Endothelial cell of umbilical vein (primary cell): ENCODE measurements at regions of chr3 and their contacts with region 1.

Region 1: GRCh38 chr3:169497567-169498257 is 165.8 kb downstream of the MECOM start:
- DNase-seq: peak; percentile 94
- H3K4me3 ChIP-seq: no peak overlapping the region
- H3K27ac ChIP-seq: peak overlapping the region; percentile 100
- H3K4me1 ChIP-seq: peaks cover 73% of the 10 kb centered on the region
- H3K27me3 ChIP-seq: no peaks in the 10 kb centered on the region
- CTCF ChIP-seq: no peak
- POLR2A ChIP-seq: no peak

Region 2: DNA sequence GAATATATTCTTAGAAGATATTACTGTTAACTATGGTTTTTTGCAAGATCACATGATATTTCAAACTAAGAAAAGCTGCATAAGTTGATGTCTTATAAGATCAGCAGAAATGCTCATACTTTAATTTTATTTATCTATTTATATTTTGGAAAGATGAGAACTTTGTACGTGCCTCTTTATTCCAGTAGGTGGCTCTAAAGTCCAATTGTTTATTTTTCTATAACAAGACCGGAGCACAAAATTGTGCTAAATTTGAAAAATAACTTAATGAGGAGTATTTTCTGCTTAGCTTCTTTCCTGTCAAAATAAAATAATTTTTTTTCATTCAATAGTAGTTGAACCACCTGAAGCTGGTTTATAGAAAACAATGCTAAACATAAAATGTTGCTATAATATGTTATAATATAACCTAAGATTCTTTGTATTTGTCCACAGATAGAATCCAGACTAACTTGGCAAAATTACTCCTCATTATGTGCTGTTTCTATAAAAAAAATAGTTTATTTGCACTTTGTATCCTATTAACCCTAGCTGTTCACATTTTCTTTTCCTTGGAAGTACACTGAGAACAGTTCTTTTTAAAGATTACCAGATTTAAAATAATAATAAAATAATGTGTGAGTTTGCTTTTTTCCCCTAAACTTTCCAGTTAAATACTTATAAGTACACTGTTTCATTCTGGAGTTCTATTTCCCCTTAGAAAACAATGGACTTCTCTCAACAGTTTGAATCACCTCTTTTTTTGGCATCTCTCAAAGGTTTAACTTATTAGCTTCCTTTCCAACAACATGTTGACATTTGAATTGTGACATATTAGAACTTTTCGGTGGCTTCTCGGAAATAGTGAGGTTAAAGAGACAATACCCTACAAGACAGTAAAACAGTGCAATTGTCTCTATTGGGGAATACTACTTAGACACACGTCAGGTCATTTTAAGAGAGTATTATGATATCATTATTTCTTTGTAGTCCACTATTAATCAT is 364.2 kb before region 1 on chr3:
- CTCF ChIA-PET with region 1: no interaction called
- POLR2A ChIA-PET with region 1: no interaction called
- dilution Hi-C with region 1: no loop called
- intact Hi-C with region 1: loop called (anchors 1 kb)
- DNase-seq: peak; percentile 83
- H3K4me3 ChIP-seq: no peak overlapping the region
- H3K27ac ChIP-seq: peak overlapping the region; percentile 52
- H3K4me1 ChIP-seq: peaks cover 44% of the 10 kb centered on the region
- H3K27me3 ChIP-seq: no peaks in the 10 kb centered on the region
- CTCF ChIP-seq: peak in 1 of 2 donors; percentile 16
- POLR2A ChIP-seq: peak; percentile 17

Region 3: GRCh38 chr3:169295126-169295525 is 202.6 kb before region 1 on chr3:
- CTCF ChIA-PET with region 1: no interaction called
- POLR2A ChIA-PET with region 1: no interaction called
- dilution Hi-C with region 1: no loop called
- intact Hi-C with region 1: loop called (anchors 5 kb)
- DNase-seq: peak; percentile 71
- H3K4me3 ChIP-seq: no peak overlapping the region
- H3K27ac ChIP-seq: no peak overlapping the region
- H3K4me1 ChIP-seq: peaks cover 7% of the 10 kb centered on the region
- H3K27me3 ChIP-seq: no peaks in the 10 kb centered on the region
- CTCF ChIP-seq: peak; percentile 29 to 32
- POLR2A ChIP-seq: no peak

Region 4: DNA sequence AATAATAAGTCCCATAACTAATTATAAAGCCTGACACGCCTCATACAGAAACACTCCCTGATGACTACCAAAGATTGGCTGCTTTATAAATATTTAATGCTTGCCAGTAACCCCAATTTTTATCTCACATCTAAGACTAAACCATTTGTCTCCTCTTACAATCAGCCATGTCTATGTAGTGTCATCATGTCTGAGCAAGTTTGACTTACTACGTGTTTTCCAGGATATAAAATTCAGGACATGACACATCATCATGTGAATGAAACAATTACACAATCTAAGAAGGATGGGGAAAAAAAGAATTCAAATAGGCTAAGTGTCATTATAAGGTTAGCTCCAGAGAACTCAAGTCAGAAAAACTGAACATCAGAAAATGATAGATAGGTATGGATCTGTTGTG is 42.9 kb before region 1 on chr3:
- CTCF ChIA-PET with region 1: interaction called, 3 read pairs
- POLR2A ChIA-PET with region 1: no interaction called
- dilution Hi-C with region 1: no loop called
- intact Hi-C with region 1: loop called (anchors 1 kb)
- DNase-seq: peak; percentile 93
- H3K4me3 ChIP-seq: no peak overlapping the region
- H3K27ac ChIP-seq: peak overlapping the region; percentile 69
- H3K4me1 ChIP-seq: peaks cover 28% of the 10 kb centered on the region
- H3K27me3 ChIP-seq: no peaks in the 10 kb centered on the region
- CTCF ChIP-seq: no peak
- POLR2A ChIP-seq: no peak

Region 5: DNA sequence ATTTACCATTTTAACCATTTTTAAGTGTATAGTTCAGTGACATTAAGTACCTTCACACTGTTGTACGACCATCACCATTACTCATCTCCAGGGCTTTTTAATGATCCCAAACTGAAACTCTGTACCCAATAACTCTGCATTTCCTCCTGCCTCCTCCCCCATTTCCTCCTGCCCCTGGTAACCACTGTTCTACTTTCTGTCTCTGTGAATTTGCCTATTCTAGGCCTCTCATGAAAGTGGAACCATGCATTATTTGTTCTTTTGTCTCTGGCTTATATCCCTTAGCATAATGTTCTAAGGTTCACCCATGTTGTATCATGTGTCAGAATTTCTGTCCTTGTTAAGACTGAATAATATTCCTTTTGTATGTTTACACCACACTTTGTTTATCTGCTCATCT is 11.6 kb after region 1 on chr3:
- CTCF ChIA-PET with region 1: interaction called, 3 read pairs
- POLR2A ChIA-PET with region 1: no interaction called
- dilution Hi-C with region 1: no loop called
- intact Hi-C with region 1: loop called (anchors 1 kb)
- DNase-seq: peak; percentile 38
- H3K4me3 ChIP-seq: no peak overlapping the region
- H3K27ac ChIP-seq: peak overlapping the region; percentile 27
- H3K4me1 ChIP-seq: peaks cover 25% of the 10 kb centered on the region
- H3K27me3 ChIP-seq: no peaks in the 10 kb centered on the region
- CTCF ChIP-seq: no peak
- POLR2A ChIP-seq: no peak

Region 6: GRCh38 chr3:169575373-169575772 is 77.7 kb after region 1 on chr3:
- CTCF ChIA-PET with region 1: no interaction called
- POLR2A ChIA-PET with region 1: no interaction called
- dilution Hi-C with region 1: no loop called
- intact Hi-C with region 1: loop called (anchors 2 kb)
- DNase-seq: peak; percentile 85
- H3K4me3 ChIP-seq: peak overlapping the region in 1 of 3 experiments; percentile 28
- H3K27ac ChIP-seq: peak overlapping the region; percentile 15
- H3K4me1 ChIP-seq: peaks cover 25% of the 10 kb centered on the region
- H3K27me3 ChIP-seq: no peaks in the 10 kb centered on the region
- CTCF ChIP-seq: no peak
- POLR2A ChIP-seq: peak; percentile 16